Sigmoid colon (tissue), 7 donors: ENCODE measurements at regions of chr7 and their contacts with region 1.

Region 1: DNA sequence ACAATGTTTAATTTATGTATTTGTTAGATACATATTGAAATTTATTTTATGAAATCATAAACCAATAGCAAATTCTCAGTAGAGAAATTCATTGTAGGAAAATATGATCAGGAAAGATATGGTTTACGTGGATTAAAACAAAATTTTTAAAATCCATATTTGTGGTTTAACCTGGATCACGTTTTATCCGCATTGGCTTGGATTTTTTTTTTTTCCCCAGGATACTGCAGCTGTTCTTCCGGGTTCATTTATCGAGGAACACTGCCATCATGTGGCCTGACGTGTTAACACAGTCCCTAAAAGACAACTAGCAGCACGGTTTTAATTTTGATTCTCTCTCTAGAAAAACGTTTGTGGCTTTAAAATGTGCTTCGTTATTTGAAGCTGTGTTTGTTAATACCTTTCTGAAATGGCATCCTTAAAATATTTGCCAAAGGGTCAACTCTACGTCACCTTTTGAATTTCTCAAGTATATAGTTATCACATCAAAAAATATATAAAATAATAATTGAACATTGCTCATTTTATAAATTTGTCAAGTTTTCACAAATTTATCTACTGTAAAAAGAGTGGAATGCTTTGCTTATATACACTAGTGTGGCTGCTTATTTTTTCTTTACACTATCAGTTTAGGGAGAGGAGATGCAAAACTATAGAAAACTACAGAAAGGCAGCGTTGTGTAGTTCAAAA is 8.7 kb upstream of the ASB4 start:
- DNase-seq: peak; percentile 77
- H3K4me3 ChIP-seq: no peak overlapping the region
- H3K27ac ChIP-seq: no peak overlapping the region
- H3K4me1 ChIP-seq: no peaks in the 10 kb centered on the region
- H3K27me3 ChIP-seq: no peaks in the 10 kb centered on the region
- CTCF ChIP-seq: peak; percentile 38 to 71 (median 64)
- EP300 ChIP-seq: no peak
- POLR2A ChIP-seq: no peak

Region 2: DNA sequence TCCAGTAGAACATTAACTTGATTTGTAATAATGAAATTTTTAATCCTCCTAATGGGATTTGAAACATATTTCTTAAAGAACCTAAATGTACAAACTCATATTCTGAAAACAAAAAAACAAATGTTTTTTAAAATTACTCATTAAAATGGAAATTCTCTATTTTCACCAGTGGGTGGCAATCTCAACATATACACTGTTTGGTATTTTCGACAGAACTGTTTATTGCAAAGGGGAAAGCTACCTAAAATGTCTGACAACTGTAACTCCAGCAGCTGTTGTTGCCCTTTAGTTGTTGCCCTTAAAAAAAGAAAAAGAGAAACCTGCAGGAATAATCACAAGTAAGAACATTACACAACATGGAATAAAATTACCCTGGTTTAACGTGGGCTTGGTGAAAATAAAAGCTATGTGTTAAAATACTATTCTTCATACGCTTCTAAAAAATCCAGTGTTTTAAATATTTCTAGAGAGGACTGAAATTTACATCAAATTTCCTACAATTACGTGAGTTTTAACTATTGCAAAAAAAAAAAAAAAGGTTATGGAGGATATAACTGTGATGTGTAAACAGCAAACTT is 1027.8 kb before region 1 on chr7:
- intact Hi-C with region 1: loop called (anchors 2 kb)
- DNase-seq: no peak
- H3K4me3 ChIP-seq: no peak overlapping the region
- H3K27ac ChIP-seq: no peak overlapping the region
- H3K4me1 ChIP-seq: peaks cover 0 to 39% (median 20%) of the 10 kb centered on the region in 4 donors
- H3K27me3 ChIP-seq: no peaks in the 10 kb centered on the region
- CTCF ChIP-seq: peak in 3 of 4 experiments; percentile 46 to 67 (median 66)
- EP300 ChIP-seq: no peak
- POLR2A ChIP-seq: no peak

Region 3: GRCh38 chr7:95246831-95247370 is 230.1 kb before region 1 on chr7:
- intact Hi-C with region 1: loop called (anchors 5 kb)
- DNase-seq: peak; percentile 70
- H3K4me3 ChIP-seq: no peak overlapping the region
- H3K27ac ChIP-seq: no peak overlapping the region
- H3K4me1 ChIP-seq: peaks cover 0 to 9% (median 0%) of the 10 kb centered on the region in 4 donors
- H3K27me3 ChIP-seq: no peaks in the 10 kb centered on the region
- CTCF ChIP-seq: peak in 3 of 4 experiments; percentile 74 to 78 (median 76)
- EP300 ChIP-seq: no peak
- POLR2A ChIP-seq: no peak

Region 4: GRCh38 chr7:95357623-95358022 is 119.4 kb before region 1 on chr7:
- intact Hi-C with region 1: loop called (anchors 10 kb)
- DNase-seq: no peak
- H3K4me3 ChIP-seq: no peak overlapping the region
- H3K27ac ChIP-seq: no peak overlapping the region
- H3K4me1 ChIP-seq: no peaks in the 10 kb centered on the region
- H3K27me3 ChIP-seq: no peaks in the 10 kb centered on the region
- CTCF ChIP-seq: no peak
- EP300 ChIP-seq: no peak
- POLR2A ChIP-seq: no peak

Region 5: GRCh38 chr7:95434557-95435421 is 42.3 kb before region 1 on chr7 and contains the start of gene PON2:
- intact Hi-C with region 1: loop called (anchors 5 kb)
- DNase-seq: peak; percentile 87
- H3K4me3 ChIP-seq: peak within 1 kb of the TSS; percentile 72 to 83 (median 78)
- H3K27ac ChIP-seq: peak within 1 kb of the TSS; percentile 90 to 94 (median 92)
- H3K4me1 ChIP-seq: peaks cover 0 to 15% (median 3%) of the 10 kb centered on the region in 4 donors
- H3K27me3 ChIP-seq: no peaks in the 10 kb centered on the region
- CTCF ChIP-seq: no peak
- EP300 ChIP-seq: no peak
- POLR2A ChIP-seq: no peak
- total RNA-seq, gene PON2: 66.3 to 103 (median 84.2) TPM

Region 6: DNA sequence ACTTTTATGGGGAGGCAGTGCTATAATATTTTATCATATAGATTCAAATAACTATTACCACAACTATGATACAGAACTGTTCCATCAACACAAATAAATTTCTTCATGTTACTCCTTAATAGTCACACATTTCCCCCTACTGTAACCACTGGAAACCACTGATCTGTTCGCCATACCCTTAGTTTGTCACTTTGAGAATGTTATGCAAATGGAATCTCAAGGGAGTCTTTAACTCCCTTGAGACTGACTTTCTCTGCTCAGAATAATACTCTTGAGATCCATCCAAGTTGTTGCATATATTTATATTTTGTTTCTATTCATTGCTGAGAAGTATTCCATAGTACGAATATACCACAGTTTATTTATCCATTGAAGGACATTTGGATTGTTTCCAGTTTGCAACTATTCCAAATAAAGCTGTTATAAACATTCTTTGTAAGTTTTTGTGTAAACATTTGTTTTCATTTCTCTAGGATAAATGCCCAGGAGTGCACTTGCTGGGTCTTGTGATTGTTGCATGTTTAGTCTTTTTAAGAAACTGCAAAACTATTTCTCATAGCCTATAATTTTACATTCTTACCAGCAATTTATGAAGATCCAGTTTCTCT is 22.5 kb before region 1 on chr7:
- intact Hi-C with region 1: no loop called
- DNase-seq: no peak
- H3K4me3 ChIP-seq: no peak overlapping the region
- H3K27ac ChIP-seq: no peak overlapping the region
- H3K4me1 ChIP-seq: no peaks in the 10 kb centered on the region
- H3K27me3 ChIP-seq: no peaks in the 10 kb centered on the region
- CTCF ChIP-seq: no peak
- EP300 ChIP-seq: no peak
- POLR2A ChIP-seq: no peak